SK-N-SH (cell line): ENCODE measurements at regions of chr19 and their contacts with region 1.

Region 1: DNA sequence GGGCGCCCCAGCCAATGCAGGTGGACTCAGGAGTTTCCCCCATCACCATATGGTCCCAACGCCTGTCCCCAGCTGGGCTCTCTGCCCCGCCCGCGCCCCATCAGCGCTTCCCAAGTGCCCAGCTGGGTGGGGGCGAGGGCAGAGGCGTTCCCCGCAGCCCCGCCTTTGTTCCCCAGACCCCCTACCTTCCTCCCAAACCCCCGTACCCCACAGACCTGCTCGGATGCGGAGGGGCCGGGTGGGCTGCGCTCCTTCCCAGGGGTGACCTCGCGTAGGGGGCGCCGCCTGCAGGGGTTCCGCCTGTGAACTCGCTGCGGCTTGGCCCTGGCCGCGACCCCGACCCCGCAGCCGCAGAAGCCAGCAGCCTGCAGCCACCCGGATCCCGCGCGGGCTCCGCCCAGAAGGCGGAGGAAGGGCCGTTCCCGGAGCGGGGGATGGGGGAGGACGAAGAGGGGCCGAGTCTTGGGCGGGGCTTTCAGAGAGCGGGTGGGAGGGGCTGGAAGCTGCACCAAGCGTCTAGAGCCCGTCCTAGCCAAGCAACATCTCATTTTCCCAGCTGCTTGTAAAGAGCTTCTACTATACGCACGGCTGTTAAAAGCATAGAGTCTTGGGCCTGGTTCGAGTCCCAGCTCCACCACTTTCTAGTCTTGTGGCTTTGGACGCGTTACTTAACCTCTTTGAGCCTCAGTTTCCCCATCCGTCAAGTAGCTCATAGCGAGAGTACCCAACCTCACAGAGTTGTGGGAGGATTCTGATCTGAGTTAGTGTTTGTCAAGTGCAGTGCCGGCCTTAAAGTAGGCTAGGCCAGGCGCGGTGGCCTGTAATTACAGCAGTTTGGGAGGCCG is at the start of gene RAB3D:
- DNase-seq: peak; percentile 99
- H3K4me3 ChIP-seq: peak within 1 kb of the TSS; percentile 66 to 88
- H3K27ac ChIP-seq: peak within 1 kb of the TSS in 1 of 2 experiments; percentile 66; a peak in 1 of 4 replicates
- H3K4me1 ChIP-seq: peaks cover 5 to 14% of the 10 kb centered on the region in 2 experiments; a peak in 2 of 4 replicates
- H3K27me3 ChIP-seq: no peaks in the 10 kb centered on the region
- CTCF ChIP-seq: no peak
- EP300 ChIP-seq: no peak
- RAD21 ChIP-seq: no peak
- polyA plus RNA-seq, gene RAB3D: 25.0 and 27.0 TPM in 2 replicates

Region 2: DNA sequence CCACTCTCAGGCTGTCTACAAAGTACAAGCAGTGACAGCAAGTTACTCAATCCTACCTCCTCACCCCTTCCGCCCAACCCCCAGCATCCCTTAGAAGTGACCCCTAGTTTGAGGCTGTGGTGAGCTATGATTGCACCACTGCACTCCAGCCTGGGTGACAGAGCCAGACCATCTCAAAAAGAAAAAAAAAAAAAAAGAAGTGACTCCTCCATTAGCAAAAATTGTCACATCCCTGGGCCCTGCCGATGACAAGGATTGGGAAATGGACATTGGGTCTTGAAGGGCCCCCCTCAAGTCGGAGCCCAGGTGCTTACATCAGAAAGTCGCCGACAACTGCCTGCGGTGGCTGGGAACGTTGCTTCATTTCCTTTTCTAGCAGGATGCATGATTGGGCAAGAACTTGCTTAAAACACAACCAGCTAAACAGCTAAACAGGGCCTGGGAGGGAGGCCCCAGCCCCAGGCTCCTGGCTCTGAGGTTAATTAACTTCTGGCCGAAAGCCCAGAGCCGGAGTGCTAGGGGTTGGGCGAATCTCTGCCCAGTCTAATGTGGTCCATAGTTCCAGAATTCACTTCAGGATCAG is 15.3 kb before region 1 on chr19:
- CTCF ChIA-PET with region 1: interaction called, 3 read pairs
- POLR2A ChIA-PET with region 1: interaction called, 17 read pairs
- DNase-seq: peak; percentile 91
- H3K4me3 ChIP-seq: 0 out of 4 replicates have a peak overlapping the region, but pooled peaks of 1 of the 2 experiments have one; percentile 1
- H3K27ac ChIP-seq: peak overlapping the region; percentile 65 to 87
- H3K4me1 ChIP-seq: peaks cover 9 to 19% of the 10 kb centered on the region in 2 experiments
- H3K27me3 ChIP-seq: no peaks in the 10 kb centered on the region
- CTCF ChIP-seq: no peak
- EP300 ChIP-seq: peak; percentile 31 to 54; a peak in 3 of 4 replicates
- RAD21 ChIP-seq: peak; percentile 37